ENCODE measurements at regions of chr22 and their contacts with region 1.

Region 1: DNA sequence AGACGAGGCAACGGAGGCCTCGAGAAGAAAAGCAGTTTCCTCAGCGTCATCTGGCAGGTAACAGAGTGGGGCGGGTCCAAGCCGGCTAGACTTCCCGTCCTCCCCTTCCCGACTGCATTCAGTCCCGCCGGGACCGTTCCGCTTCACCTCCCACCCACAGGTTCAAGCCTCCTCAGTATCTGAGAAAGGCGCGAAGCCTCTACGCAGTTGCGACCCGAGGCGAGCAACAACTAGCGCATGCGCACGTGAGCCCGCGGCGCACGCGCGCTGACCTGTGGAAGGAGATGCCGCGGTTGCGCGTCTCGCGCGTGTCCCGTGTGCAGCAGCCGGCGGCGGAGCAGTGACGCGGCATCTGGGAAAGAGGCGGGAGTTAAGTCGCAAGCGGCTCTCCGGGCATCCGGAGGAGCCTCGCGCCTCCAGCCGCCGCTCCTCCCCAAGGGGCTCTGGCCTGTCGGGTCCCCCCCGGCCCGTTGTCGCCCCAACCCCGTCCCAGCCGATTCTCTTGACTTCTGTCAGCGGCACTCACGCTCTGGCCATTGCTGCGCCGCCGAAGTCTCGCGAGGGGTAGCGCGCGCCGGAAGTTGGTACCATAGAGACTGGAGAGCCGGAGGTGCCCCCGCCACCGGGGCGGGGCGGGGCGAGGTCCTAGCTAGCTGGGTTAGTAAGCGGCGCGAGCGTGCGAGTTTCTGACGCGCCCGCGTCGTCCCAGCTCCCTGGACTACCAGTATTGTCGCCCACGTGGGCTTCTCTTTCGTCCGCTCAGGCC is at the start of gene THAP7:
- DNase-seq: peak; percentile 90 to 99 (median 97)
- ATAC-seq: peak; percentile 86
- H3K4me3 ChIP-seq: peak within 1 kb of the TSS; percentile 81 to 82
- H3K4me3 Mint-ChIP-seq: peak within 1 kb of the TSS; percentile 91
- H3K27ac ChIP-seq: peak within 1 kb of the TSS; percentile 93 to 100
- H3K27ac Mint-ChIP-seq: peak within 1 kb of the TSS; percentile 99
- H3K4me1 ChIP-seq: peaks cover 38% of the 10 kb centered on the region
- H3K4me1 Mint-ChIP-seq: peaks cover 29% of the 10 kb centered on the region
- H3K27me3 ChIP-seq: no peaks in the 10 kb centered on the region
- H3K27me3 Mint-ChIP-seq: no peaks in the 10 kb centered on the region
- CTCF ChIP-seq: no peak
- total RNA-seq, gene THAP7: 71.2 to 73.6 TPM

Region 2: DNA sequence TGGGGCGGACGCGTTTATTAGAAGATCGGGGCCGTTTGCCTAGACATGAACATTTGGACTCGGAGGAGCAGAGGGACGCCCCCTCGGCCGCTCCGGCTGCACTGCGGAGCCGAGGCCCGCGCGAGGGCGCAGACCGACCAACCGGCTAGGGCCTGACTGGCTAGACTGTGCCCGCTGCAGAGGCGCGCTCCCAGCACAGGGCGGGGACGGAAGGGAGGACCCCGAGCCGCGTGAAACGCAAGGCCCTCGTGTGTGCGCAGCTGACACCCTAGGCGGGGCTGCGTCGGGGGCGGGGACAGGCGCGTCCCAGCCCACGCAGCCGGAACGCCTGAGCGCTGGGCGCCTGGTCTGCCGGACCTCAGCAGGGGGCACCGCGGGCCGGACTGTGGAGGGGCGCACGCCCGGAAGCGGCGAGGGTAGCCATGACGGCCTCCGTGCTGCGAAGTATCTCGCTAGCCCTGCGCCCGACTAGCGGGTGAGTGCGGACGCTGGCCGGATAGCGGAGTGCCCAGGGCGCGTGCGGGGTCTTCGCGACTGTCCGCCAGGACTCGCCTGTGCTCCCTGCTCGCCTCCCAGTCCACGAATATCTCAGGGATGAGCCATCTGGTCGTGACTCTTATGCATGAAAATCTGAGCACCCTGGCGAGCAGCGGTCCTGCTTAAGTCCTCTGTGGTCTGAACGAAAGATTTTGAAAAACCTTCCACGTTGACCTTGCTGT is 1569.5 kb before region 1 on chr22 and contains the start of gene MRPL40:
- CTCF ChIA-PET with region 1: no interaction called
- POLR2A ChIA-PET with region 1: no interaction called
- intact Hi-C with region 1: loop called in 1 of 2 experiments (anchors 10 kb)
- DNase-seq: peak; percentile 61 to 93 (median 88)
- ATAC-seq: peak; percentile 82
- H3K4me3 ChIP-seq: peak within 1 kb of the TSS; percentile 73 to 88
- H3K4me3 Mint-ChIP-seq: peak within 1 kb of the TSS; percentile 91
- H3K27ac ChIP-seq: peak within 1 kb of the TSS; percentile 90 to 96
- H3K27ac Mint-ChIP-seq: peak within 1 kb of the TSS; percentile 93
- H3K4me1 ChIP-seq: peaks cover 25% of the 10 kb centered on the region
- H3K4me1 Mint-ChIP-seq: peaks cover 42% of the 10 kb centered on the region
- H3K27me3 ChIP-seq: no peaks in the 10 kb centered on the region
- H3K27me3 Mint-ChIP-seq: no peaks in the 10 kb centered on the region
- CTCF ChIP-seq: no peak
- total RNA-seq, gene MRPL40: 9.9 to 10.5 TPM

Region 3: DNA sequence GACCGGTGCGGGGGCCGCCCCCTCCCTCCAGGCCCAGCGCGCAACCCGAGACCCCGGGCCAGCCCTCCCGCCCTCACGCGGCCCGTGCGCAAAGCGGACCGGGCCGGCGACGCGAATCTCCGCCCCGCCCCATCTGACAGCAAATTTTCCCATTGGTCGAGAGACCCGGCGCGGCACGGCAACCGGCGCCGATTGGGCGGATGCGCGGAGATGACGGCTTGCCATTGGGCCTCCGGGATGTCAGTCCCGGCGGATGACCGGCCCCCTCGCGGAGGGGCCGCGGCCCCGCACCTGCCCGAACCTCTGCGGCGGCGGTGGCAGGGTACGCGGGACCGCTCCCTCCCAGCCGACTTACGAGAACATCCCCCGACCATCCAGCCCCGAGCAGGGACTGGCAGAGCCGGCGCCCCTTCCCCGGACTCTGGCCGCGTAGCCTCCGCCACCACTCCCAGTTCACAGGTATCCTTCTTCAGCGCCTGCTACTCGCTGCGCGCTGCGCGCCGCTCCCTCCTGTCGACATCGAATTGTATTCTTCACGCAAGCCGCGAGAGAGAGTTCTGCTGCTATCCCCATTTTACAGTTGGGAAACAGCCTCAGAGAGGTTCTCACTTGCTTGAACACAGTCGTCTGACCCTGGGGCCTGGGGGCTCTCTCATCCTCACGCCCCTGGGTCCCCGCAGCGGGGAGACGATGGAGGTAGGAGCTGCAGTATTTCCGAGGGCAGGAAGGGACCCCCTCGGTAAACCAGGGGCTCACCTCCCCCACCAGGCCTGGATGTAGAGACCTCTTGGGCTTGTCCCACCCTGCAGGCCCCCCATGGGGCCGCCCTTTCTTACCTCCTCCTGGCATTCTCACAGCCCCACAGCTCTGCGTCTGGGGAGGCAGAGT is 984.8 kb before region 1 on chr22 and contains the start of gene ARVCF:
- CTCF ChIA-PET with region 1: no interaction called
- POLR2A ChIA-PET with region 1: no interaction called
- intact Hi-C with region 1: loop called in 1 of 2 experiments (anchors 5 kb)
- DNase-seq: peak; percentile 85 to 96 (median 92)
- ATAC-seq: peak; percentile 66
- H3K4me3 ChIP-seq: peak within 1 kb of the TSS; percentile 79 to 81
- H3K4me3 Mint-ChIP-seq: peak within 1 kb of the TSS; percentile 91
- H3K27ac ChIP-seq: no peak within 1 kb of the TSS
- H3K27ac Mint-ChIP-seq: peak within 1 kb of the TSS; percentile 14
- H3K4me1 ChIP-seq: peaks cover 19% of the 10 kb centered on the region
- H3K4me1 Mint-ChIP-seq: peaks cover 25% of the 10 kb centered on the region
- H3K27me3 ChIP-seq: no peaks in the 10 kb centered on the region
- H3K27me3 Mint-ChIP-seq: no peaks in the 10 kb centered on the region
- CTCF ChIP-seq: no peak
- total RNA-seq, gene ARVCF: 1.1 to 2.3 TPM

Region 4: GRCh38 chr22:20858615-20859416 is 142.9 kb before region 1 on chr22 and contains the starts of genes PI4KA and SNAP29:
- CTCF ChIA-PET with region 1: no interaction called
- POLR2A ChIA-PET with region 1: no interaction called
- intact Hi-C with region 1: loop called (anchors 1 to 2 kb)
- DNase-seq: peak; percentile 94 to 99 (median 98)
- ATAC-seq: peak; percentile 88
- H3K4me3 ChIP-seq: peak within 1 kb of the TSS; percentile 63 to 78
- H3K4me3 Mint-ChIP-seq: peak within 1 kb of the TSS; percentile 91
- H3K27ac ChIP-seq: peak within 1 kb of the TSS; percentile 72 to 83
- H3K27ac Mint-ChIP-seq: peak within 1 kb of the TSS; percentile 88
- H3K4me1 ChIP-seq: peaks cover 24% of the 10 kb centered on the region
- H3K4me1 Mint-ChIP-seq: peaks cover 65% of the 10 kb centered on the region
- H3K27me3 ChIP-seq: no peaks in the 10 kb centered on the region
- H3K27me3 Mint-ChIP-seq: no peaks in the 10 kb centered on the region
- CTCF ChIP-seq: no peak
- total RNA-seq, gene PI4KA: 154 to 155 TPM
- total RNA-seq, gene SNAP29: 16.5 to 17.1 TPM

Region 5: GRCh38 chr22:20953668-20954500 is 47.9 kb before region 1 on chr22:
- CTCF ChIA-PET with region 1: no interaction called
- POLR2A ChIA-PET with region 1: no interaction called
- intact Hi-C with region 1: no loop called
- DNase-seq: no peak
- ATAC-seq: no peak
- H3K4me3 ChIP-seq: no peak overlapping the region
- H3K4me3 Mint-ChIP-seq: no peak overlapping the region
- H3K27ac ChIP-seq: no peak overlapping the region
- H3K27ac Mint-ChIP-seq: no peak overlapping the region
- H3K4me1 ChIP-seq: peaks cover 21% of the 10 kb centered on the region
- H3K4me1 Mint-ChIP-seq: peaks cover 13% of the 10 kb centered on the region
- H3K27me3 ChIP-seq: peaks cover 10 to 13% of the 10 kb centered on the region in 2 experiments
- H3K27me3 Mint-ChIP-seq: peaks cover 18% of the 10 kb centered on the region
- CTCF ChIP-seq: no peak

Region 6: DNA sequence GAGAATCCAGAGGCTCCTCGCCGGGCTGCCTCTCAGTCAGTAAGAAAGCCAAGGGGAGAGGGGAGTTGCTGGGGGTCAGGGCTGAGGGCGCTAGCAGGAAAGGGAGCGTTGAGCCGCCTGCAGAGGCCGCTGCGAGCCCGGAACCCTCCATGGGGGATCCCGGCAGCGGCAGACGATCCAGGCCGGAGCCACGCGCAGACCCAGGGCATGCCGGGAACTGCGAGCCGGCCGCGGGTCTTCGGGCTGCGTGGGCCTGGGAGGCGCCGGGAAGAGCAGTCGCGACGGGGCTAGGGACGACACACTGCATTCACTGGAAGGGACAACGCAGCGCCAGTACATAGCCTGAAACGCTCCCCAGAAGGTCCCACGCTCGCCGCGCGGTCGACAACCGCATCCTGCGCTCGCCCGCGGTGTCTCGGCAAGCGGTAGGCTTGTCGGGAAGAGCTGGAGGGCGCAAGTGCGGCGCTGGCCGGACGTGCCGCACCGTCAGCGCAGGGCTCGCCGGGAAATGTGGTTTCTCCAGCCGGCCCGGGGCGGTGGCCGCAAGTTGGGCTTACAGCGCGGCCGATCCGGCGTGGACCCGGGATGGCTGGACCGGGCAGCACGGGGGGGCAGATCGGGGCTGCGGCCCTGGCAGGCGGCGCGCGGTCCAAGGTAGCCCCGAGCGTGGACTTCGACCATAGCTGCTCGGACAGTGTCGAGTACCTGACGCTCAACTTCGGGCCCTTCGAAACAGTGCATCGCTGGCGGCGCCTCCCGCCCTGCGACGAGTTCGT is 19.8 kb before region 1 on chr22 and contains the start of gene LZTR1:
- CTCF ChIA-PET with region 1: interaction called, 3 read pairs
- POLR2A ChIA-PET with region 1: interaction called, 18 read pairs
- intact Hi-C with region 1: loop called (anchors 1 kb)
- DNase-seq: peak; percentile 33 to 86 (median 66)
- ATAC-seq: peak; percentile 64
- H3K4me3 ChIP-seq: peak within 1 kb of the TSS; percentile 58 to 74
- H3K4me3 Mint-ChIP-seq: peak within 1 kb of the TSS; percentile 93
- H3K27ac ChIP-seq: peak within 1 kb of the TSS; percentile 66 to 78
- H3K27ac Mint-ChIP-seq: peak within 1 kb of the TSS; percentile 92
- H3K4me1 ChIP-seq: peaks cover 31% of the 10 kb centered on the region
- H3K4me1 Mint-ChIP-seq: peaks cover 43% of the 10 kb centered on the region
- H3K27me3 ChIP-seq: no peaks in the 10 kb centered on the region
- H3K27me3 Mint-ChIP-seq: no peaks in the 10 kb centered on the region
- CTCF ChIP-seq: no peak
- total RNA-seq, gene LZTR1: 42.8 to 44.8 TPM

Region 7: DNA sequence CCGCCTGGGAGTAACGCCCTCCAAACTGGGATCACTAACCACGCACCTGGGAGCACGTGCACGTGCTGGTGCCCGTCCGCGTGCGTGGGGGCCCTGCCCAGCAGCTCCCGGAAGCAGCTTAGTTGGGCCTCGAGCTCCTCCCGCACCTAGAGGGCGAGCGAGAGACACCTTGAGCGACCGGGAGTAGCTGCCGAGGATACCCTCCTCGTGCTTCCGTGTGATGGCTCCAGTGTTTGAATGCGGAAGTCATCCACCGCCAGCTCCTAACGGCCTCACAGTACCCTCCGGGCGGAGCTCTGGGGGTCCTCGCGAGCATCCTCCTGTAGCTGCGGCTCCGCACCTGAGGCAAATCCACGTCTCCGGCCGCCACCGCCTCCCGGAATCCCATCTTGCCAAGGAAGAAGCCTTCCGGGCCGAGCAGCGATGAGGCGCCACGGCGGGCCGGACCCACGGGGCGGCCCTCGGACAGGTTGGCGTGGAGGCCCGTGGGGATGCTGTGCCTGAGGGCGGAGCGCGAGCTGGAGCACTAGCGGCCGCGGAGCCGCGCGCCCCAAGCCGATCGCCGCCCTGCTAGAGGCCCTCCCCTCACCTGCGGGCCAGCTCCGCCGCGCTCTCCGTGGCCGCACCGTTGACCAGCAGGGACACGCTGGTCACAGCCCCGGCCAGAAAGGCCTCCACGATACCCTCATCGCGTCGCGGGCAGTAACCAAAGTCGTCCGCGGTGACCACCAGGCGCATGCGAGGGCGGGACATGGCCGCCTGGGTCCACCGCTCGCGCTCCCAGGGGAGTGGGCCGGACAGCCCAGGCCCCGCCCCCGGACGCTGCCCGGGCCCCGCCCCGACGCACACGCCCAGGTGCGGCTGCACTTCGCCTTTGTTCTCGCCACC is 627.8 kb after region 1 on chr22 and contains the start of gene YDJC:
- CTCF ChIA-PET with region 1: no interaction called
- POLR2A ChIA-PET with region 1: no interaction called
- intact Hi-C with region 1: loop called in 1 of 2 experiments (anchors 5 kb)
- DNase-seq: peak; percentile 91 to 97 (median 95)
- ATAC-seq: peak; percentile 84
- H3K4me3 ChIP-seq: peak within 1 kb of the TSS; percentile 92 to 99
- H3K4me3 Mint-ChIP-seq: peak within 1 kb of the TSS; percentile 93
- H3K27ac ChIP-seq: peak within 1 kb of the TSS; percentile 89 to 91
- H3K27ac Mint-ChIP-seq: peak within 1 kb of the TSS; percentile 90
- H3K4me1 ChIP-seq: peaks cover 42% of the 10 kb centered on the region
- H3K4me1 Mint-ChIP-seq: peaks cover 37% of the 10 kb centered on the region
- H3K27me3 ChIP-seq: no peaks in the 10 kb centered on the region
- H3K27me3 Mint-ChIP-seq: no peaks in the 10 kb centered on the region
- CTCF ChIP-seq: peak; percentile 95
- total RNA-seq, gene YDJC: 25.6 to 26.0 TPM

Region 8: GRCh38 chr22:21867528-21868266 is 866.0 kb after region 1 on chr22 and contains the start of gene MAPK1:
- CTCF ChIA-PET with region 1: no interaction called
- POLR2A ChIA-PET with region 1: no interaction called
- intact Hi-C with region 1: loop called in 1 of 2 experiments (anchors 5 kb)
- DNase-seq: peak; percentile 87 to 97 (median 94)
- ATAC-seq: peak; percentile 96
- H3K4me3 ChIP-seq: peak within 1 kb of the TSS; percentile 92 to 93
- H3K4me3 Mint-ChIP-seq: peak within 1 kb of the TSS; percentile 97
- H3K27ac ChIP-seq: peak within 1 kb of the TSS; percentile 86 to 96
- H3K27ac Mint-ChIP-seq: peak within 1 kb of the TSS; percentile 97
- H3K4me1 ChIP-seq: peaks cover 38% of the 10 kb centered on the region
- H3K4me1 Mint-ChIP-seq: peaks cover 51% of the 10 kb centered on the region
- H3K27me3 ChIP-seq: no peaks in the 10 kb centered on the region
- H3K27me3 Mint-ChIP-seq: no peaks in the 10 kb centered on the region
- CTCF ChIP-seq: peak; percentile 47
- total RNA-seq, gene MAPK1: 34.0 to 39.2 TPM